ENCODE measurements at regions of chr22 and their contacts with region 1.

Region 1: GRCh38 chr22:40436505-40437451 is 66.4 kb downstream of the SGSM3 start:
- DNase-seq: peak; percentile 26
- H3K4me3 Mint-ChIP-seq: no peak overlapping the region
- H3K27ac Mint-ChIP-seq: peak overlapping the region; percentile 46
- H3K4me1 Mint-ChIP-seq: peaks cover 50% of the 10 kb centered on the region
- H3K27me3 Mint-ChIP-seq: no peaks in the 10 kb centered on the region

Region 2: GRCh38 chr22:39559454-39560105 is 877.2 kb before region 1 on chr22:
- CTCF ChIA-PET with region 1: no interaction called
- POLR2A ChIA-PET with region 1: no interaction called
- DNase-seq: no peak
- H3K4me3 Mint-ChIP-seq: no peak overlapping the region
- H3K27ac Mint-ChIP-seq: no peak overlapping the region
- H3K4me1 Mint-ChIP-seq: peaks cover 3% of the 10 kb centered on the region
- H3K27me3 Mint-ChIP-seq: peaks cover 42% of the 10 kb centered on the region

Region 3: GRCh38 chr22:39946503-39947219 is 490.1 kb before region 1 on chr22:
- CTCF ChIA-PET with region 1: no interaction called
- POLR2A ChIA-PET with region 1: no interaction called
- DNase-seq: no peak
- H3K4me3 Mint-ChIP-seq: no peak overlapping the region
- H3K27ac Mint-ChIP-seq: no peak overlapping the region
- H3K4me1 Mint-ChIP-seq: peaks cover 94% of the 10 kb centered on the region
- H3K27me3 Mint-ChIP-seq: no peaks in the 10 kb centered on the region

Region 4: DNA sequence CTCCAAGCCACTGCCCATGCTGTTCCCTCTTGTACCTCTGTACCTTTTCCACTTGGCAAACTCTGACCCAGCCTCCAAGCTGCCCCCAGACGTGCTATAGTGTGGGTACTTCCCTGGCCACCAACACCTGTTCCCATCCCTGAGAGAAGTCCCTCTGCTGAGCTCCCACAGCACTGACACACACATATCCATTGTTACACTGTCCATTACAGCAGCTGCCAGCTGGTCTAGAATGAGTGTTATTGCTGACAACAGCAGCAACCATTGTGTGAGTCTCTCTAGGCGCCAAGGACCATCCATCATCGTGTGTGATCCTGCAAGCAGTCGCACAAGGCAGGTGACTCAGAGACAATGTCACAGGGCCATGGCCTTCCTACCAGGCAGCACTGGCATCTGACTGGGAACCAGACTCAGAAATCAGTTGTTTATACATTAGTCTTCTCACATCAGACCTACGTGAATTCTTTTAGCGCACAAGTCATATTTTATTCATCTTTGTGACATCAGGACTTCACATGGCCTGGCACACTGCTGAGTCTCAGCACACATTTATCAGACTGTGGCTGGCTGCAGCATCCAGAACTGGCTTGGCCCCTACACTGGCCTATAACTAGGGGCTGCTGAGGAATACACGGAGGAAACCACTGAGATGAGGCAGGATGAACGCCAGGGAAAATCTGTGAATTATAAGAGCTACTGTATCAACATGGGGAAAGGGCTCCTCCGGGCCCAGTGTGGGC is 10.0 kb before region 1 on chr22:
- CTCF ChIA-PET with region 1: interaction called, 33 read pairs
- POLR2A ChIA-PET with region 1: no interaction called
- DNase-seq: no peak
- H3K4me3 Mint-ChIP-seq: no peak overlapping the region
- H3K27ac Mint-ChIP-seq: peak overlapping the region; percentile 42
- H3K4me1 Mint-ChIP-seq: peaks cover 8% of the 10 kb centered on the region
- H3K27me3 Mint-ChIP-seq: no peaks in the 10 kb centered on the region

Region 5: DNA sequence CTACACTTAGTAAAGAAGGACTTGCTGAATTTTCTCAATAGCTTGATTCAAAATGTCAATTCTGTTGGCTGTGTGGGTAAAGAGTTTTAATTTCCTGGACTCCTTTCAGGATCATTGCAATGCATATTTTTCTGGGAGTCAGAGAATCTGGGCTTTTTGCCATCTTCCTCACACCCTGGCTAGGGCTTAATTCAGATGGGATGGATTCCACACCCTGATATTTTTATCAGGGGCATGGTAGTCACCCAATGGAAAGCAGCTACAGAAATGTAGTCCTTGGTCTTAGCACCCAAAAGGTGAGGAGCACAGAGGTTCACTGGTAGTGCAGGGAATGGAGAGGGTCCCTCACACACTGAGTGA is 12.9 kb after region 1 on chr22:
- CTCF ChIA-PET with region 1: interaction called, 14 read pairs
- POLR2A ChIA-PET with region 1: no interaction called
- DNase-seq: no peak
- H3K4me3 Mint-ChIP-seq: no peak overlapping the region
- H3K27ac Mint-ChIP-seq: peak overlapping the region; percentile 62
- H3K4me1 Mint-ChIP-seq: peaks cover 59% of the 10 kb centered on the region
- H3K27me3 Mint-ChIP-seq: no peaks in the 10 kb centered on the region

Region 6: GRCh38 chr22:40547729-40548172 is 111.0 kb after region 1 on chr22:
- CTCF ChIA-PET with region 1: no interaction called
- POLR2A ChIA-PET with region 1: no interaction called
- DNase-seq: no peak
- H3K4me3 Mint-ChIP-seq: no peak overlapping the region
- H3K27ac Mint-ChIP-seq: no peak overlapping the region
- H3K4me1 Mint-ChIP-seq: peaks cover 5% of the 10 kb centered on the region
- H3K27me3 Mint-ChIP-seq: no peaks in the 10 kb centered on the region

Measured in activated CD4-positive, alpha-beta T cell treated with anti-CD3 and anti-CD28 coated beads, Interleukin-2, amount 10 ng/mL, durations not matched to agents 7 days and 5 days (primary cell).